Sciatic nerve (tissue), 2 donors: ENCODE measurements at regions of chr1 and their contacts with region 1.

Region 1: DNA sequence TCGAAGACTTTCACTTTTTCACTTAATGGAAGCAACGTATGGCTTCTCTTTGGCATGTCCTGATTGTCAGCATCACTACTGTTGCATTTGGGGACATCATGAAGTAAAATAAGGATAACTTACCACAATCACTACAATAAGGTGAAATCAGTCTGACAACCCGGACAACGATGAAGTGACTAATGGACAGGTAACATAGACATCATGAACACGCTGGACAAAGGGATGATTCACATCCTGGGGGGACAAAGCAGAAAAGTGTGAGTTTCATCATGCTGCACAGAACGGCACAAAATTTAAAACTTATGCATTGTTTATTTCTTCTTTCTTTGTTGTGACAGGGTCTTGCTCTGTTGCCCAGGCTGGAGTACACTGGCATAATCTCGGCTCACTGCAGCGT is 53.9 kb downstream of the FH start:
- DNase-seq: no peak
- ATAC-seq: no peak

Region 2: DNA sequence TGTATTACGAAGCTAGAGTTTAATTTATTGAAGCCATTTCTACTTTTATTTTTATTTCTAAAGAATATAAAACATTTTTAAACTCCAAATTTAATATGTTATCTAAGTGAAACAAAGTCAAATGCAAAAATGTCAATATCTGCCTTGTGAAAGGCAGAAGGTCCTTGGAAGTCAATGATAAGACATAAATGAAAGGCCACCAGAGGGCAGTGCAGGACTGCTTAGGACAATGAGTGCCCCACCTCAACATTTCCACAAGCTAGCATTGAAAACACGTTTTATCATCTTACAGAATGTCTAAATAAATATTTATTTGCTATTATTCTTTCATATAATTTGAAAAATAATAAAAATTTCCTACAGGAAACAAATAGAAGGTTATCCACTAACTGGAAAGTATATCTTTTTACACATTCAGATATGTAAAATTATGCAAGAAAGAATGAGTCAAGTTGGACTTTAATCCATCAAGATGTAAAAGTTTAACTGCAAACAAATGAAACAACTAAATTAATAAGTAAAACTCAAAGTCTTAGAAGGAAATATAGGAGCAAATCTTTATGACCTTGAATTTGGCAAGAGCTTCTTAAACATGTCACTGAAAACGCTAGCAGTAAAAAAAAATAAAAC is 1514.0 kb before region 1 on chr1:
- intact Hi-C with region 1: no loop called
- DNase-seq: peak; percentile 80
- ATAC-seq: peak; percentile 60

Region 3: GRCh38 chr1:241495741-241496140 is 30.1 kb after region 1 on chr1:
- intact Hi-C with region 1: loop called (anchors 1 kb)
- DNase-seq: no peak
- ATAC-seq: no peak